Activated B cell treated with CpG ODN at 0.5 μM for 24 hours (primary cell): ENCODE measurements at regions of chr12 and their contacts with region 1.

Region 1: GRCh38 chr12:95072900-95073697 is at the start of gene NR2C1:
- DNase-seq: peak; percentile 83
- ATAC-seq: peak; percentile 99
- H3K4me3 Mint-ChIP-seq: peak within 1 kb of the TSS; percentile 97
- H3K27ac Mint-ChIP-seq: peak within 1 kb of the TSS; percentile 94
- H3K4me1 Mint-ChIP-seq: peaks cover 13% of the 10 kb centered on the region
- H3K27me3 Mint-ChIP-seq: no peaks in the 10 kb centered on the region
- CTCF ChIP-seq: no peak
- total RNA-seq, gene NR2C1: 28.3 and 30.8 TPM in 2 replicates

Region 2: DNA sequence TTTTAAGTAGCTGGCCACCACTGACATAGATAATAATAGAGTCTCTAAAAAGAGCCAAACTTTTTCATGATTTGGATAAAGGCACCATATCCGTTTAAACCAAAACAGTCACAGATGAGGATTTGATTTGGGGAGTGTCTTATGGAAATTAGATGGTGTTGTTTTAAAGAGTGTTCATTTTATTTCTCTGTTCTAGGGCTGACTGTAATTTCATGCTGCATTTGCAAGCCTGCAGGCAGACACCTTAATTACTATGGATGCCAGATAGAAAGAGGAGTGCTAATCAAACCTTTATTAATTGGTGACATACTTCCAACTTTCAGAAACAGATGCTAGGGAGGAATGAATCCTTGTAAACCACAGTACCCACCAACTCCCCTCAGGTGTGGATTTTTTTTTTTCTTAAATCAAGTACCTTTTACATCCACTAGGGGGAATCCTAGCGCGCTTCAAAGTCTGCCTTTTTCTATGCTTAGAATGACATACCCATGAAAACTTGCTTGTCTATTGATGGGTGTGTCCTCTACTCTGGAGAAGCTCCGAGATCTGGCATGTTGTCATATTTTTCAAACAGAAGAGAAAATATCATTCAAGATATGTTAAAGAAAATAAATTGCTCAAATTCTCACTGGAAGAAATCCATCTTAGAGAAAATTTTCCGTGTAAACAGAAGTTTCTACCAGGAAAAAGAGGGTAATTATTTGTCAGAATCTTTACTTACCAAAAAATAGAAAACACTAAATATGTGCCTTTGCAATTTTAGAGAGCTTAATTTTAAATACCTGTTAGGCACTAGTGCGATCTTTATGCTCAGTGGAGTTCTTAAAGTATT is 938.9 kb before region 1 on chr12:
- CTCF ChIA-PET with region 1: no interaction called
- POLR2A ChIA-PET with region 1: no interaction called
- intact Hi-C with region 1: loop called (anchors 10 kb)
- DNase-seq: no peak
- ATAC-seq: peak; percentile 97
- H3K4me3 Mint-ChIP-seq: no peak overlapping the region
- H3K27ac Mint-ChIP-seq: no peak overlapping the region
- H3K4me1 Mint-ChIP-seq: peaks cover 9% of the 10 kb centered on the region
- H3K27me3 Mint-ChIP-seq: no peaks in the 10 kb centered on the region
- CTCF ChIP-seq: peak; percentile 19

Region 3: DNA sequence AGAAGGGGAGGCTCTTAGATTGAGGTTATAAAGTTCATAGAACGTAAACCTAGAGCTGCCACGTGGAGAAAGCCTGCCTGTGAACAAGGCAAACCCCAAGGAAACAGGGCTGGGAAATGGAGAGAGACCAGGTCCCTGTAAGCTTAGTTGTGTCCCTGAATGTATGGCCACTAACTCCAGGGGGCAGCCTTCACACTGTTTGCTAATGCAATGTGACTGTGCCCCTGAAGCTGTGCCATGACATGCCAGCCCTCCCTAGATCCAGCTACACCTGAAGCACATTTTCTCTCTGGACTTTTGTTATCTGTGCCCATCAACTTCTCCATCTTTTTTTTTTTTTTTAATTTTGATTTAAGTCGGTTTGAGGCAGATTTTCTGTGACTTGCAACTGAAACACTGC is 362.2 kb before region 1 on chr12:
- CTCF ChIA-PET with region 1: no interaction called
- POLR2A ChIA-PET with region 1: no interaction called
- intact Hi-C with region 1: loop called (anchors 1 kb)
- DNase-seq: no peak
- ATAC-seq: peak; percentile 69
- H3K4me3 Mint-ChIP-seq: no peak overlapping the region
- H3K27ac Mint-ChIP-seq: no peak overlapping the region
- H3K4me1 Mint-ChIP-seq: peaks cover 32% of the 10 kb centered on the region
- H3K27me3 Mint-ChIP-seq: no peaks in the 10 kb centered on the region
- CTCF ChIP-seq: no peak

Region 4: DNA sequence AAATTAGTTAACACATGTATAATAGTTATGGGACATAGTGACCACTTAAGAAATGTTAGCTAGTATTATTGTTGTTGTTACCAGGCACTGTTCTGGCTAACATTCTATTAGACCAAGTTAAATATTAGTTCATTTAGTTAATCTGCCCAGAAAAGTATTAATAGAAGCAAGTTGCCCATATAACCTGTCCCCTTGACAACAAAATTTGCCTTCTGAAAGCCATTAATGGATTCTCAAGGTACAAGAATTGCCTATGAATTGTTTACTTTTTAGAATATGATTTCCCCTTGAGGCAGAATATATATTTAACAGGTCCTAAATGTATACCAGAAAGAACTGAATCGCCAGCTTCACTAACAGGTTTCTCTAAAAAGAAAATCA is 255.4 kb before region 1 on chr12:
- CTCF ChIA-PET with region 1: no interaction called
- POLR2A ChIA-PET with region 1: no interaction called
- intact Hi-C with region 1: loop called (anchors 2 kb)
- DNase-seq: no peak
- ATAC-seq: no peak
- H3K4me3 Mint-ChIP-seq: peak overlapping the region; percentile 87
- H3K27ac Mint-ChIP-seq: peak overlapping the region; percentile 97
- H3K4me1 Mint-ChIP-seq: peaks cover 71% of the 10 kb centered on the region
- H3K27me3 Mint-ChIP-seq: no peaks in the 10 kb centered on the region
- CTCF ChIP-seq: no peak

Region 5: DNA sequence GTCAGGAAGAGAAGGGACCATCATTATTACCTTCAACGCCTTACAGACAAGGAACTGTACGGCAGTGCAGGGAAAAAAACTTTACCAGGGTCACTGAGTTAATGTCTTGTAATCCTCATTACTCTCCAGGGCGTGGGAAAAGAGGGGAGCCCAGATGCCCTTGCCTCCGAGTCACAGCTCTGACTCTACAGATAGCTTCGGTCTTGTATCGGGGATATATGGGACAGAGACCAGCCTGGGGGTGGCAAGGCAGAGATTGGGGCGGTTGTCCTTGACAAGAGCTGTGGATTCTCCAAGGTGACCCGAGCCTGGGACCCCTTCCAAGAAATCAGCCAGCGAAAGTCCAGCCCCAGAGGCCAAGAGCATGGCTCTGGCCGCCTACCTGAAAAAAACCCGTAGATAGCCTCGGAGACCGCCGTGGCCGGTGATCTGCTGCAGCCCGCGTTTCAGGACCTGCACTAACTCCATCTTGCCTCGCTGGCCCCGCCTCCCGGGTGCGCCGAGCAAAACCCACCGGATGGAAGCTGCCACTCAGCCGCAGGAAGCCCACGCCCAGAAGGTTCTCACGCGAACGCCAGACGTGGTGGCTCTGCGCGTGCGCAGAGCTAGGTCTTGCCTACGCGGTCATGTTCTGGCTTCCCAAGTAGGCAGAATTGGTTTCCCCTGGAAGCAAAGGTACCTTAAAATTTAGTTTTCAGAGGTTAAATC is 69.7 kb before region 1 on chr12 and contains the start of gene NDUFA12:
- CTCF ChIA-PET with region 1: no interaction called
- POLR2A ChIA-PET with region 1: interaction called, 6 read pairs
- intact Hi-C with region 1: loop called (anchors 1 kb)
- DNase-seq: peak; percentile 89
- ATAC-seq: peak; percentile 99
- H3K4me3 Mint-ChIP-seq: peak within 1 kb of the TSS; percentile 94
- H3K27ac Mint-ChIP-seq: peak within 1 kb of the TSS; percentile 90
- H3K4me1 Mint-ChIP-seq: peaks cover 35% of the 10 kb centered on the region
- H3K27me3 Mint-ChIP-seq: no peaks in the 10 kb centered on the region
- CTCF ChIP-seq: no peak
- total RNA-seq, gene NDUFA12: 80.2 and 81.7 TPM in 2 replicates

Region 6: GRCh38 chr12:95057424-95057823 is 15.7 kb before region 1 on chr12:
- CTCF ChIA-PET with region 1: no interaction called
- POLR2A ChIA-PET with region 1: no interaction called
- intact Hi-C with region 1: no loop called
- DNase-seq: no peak
- ATAC-seq: no peak
- H3K4me3 Mint-ChIP-seq: no peak overlapping the region
- H3K27ac Mint-ChIP-seq: no peak overlapping the region
- H3K4me1 Mint-ChIP-seq: no peaks in the 10 kb centered on the region
- H3K27me3 Mint-ChIP-seq: no peaks in the 10 kb centered on the region
- CTCF ChIP-seq: no peak

Region 7: DNA sequence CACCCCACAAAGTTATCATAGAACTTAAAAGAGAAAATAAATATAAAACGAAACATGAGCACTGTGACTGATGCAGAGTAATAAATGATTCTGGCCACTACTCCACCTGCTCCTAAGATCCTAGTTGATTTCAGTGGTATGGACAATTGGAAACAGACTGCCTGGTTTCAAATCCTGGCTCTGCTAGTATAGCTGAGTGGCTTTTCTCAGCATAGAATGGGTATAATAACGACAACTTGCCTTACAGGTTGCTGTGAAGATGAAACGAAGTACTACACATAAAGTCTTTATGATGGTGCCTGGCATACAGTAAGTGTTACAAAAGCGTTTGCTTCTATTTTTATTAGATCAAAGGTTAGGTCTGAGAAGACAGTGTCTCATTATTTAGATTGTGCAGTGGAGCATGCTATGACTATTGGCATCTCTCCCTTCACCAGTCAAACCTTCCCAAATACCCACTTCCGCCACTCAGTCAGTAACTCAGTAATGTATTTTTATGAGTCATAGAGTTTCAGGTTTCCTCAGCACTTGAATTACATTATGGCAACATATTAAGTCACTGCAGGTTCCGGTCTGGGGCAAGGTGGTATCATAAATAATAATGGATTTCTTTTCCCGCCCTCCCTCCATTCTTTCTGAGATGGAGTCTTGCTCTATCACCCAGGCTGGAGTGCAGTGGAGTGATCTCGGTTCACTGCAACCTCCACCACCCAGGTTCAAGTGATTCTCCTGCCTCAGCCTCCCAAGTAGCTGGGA is 30.0 kb after region 1 on chr12:
- CTCF ChIA-PET with region 1: interaction called, 5 read pairs
- POLR2A ChIA-PET with region 1: interaction called, 5 read pairs
- intact Hi-C with region 1: loop called (anchors 1 kb)
- DNase-seq: no peak
- ATAC-seq: peak; percentile 94
- H3K4me3 Mint-ChIP-seq: no peak overlapping the region
- H3K27ac Mint-ChIP-seq: peak overlapping the region; percentile 37
- H3K4me1 Mint-ChIP-seq: peaks cover 17% of the 10 kb centered on the region
- H3K27me3 Mint-ChIP-seq: no peaks in the 10 kb centered on the region
- CTCF ChIP-seq: no peak

Region 8: DNA sequence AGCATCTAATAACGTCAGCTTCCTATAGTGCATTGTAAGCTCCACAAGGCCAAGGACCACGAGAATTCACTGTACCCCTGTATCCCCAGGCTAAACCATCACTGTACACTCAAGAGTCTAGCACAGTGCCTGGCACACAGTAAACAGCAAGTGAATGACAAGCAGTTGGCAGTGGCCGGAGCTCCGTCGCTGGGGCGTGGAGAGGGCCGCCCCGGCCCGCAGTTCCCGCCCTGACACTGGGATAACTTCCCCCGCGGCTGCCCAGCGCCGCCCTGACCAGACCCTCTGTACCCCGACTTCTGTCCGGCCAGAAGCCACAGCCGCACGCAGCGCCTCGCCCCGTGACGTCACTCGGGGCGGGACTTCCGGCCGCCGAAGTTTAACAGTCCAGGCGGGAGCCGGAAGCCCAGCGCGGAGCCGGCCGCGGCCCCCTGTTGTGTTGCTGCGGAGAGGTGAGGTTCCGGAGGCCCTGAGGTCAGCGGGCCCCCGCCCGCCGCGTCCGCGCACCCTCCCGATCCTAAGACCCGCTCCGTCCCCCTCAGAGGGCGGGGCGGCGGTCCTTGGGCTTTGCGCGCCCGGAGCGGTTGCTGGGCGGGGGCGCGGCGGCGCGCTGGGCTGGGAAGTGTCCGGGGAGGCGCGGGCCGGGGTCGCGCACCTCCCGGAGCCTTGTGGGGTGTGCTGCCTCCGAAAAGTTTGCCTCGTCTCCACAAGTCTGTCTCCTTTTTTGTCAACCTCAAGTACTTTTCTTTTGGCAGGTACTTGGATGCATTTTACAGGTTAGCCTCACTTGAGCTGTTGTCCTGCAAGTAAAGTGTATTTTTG is 1834.0 kb after region 1 on chr12 and contains the start of gene NEDD1:
- CTCF ChIA-PET with region 1: no interaction called
- POLR2A ChIA-PET with region 1: no interaction called
- intact Hi-C with region 1: loop called (anchors 5 kb)
- DNase-seq: peak; percentile 85
- ATAC-seq: peak; percentile 85
- H3K4me3 Mint-ChIP-seq: peak within 1 kb of the TSS; percentile 95
- H3K27ac Mint-ChIP-seq: peak within 1 kb of the TSS; percentile 91
- H3K4me1 Mint-ChIP-seq: peaks cover 41% of the 10 kb centered on the region
- H3K27me3 Mint-ChIP-seq: peaks cover 2% of the 10 kb centered on the region
- CTCF ChIP-seq: no peak
- total RNA-seq, gene NEDD1: 15.0 and 16.3 TPM in 2 replicates